ENCODE measurements at regions of chr5 and their contacts with region 1.

Region 1: DNA sequence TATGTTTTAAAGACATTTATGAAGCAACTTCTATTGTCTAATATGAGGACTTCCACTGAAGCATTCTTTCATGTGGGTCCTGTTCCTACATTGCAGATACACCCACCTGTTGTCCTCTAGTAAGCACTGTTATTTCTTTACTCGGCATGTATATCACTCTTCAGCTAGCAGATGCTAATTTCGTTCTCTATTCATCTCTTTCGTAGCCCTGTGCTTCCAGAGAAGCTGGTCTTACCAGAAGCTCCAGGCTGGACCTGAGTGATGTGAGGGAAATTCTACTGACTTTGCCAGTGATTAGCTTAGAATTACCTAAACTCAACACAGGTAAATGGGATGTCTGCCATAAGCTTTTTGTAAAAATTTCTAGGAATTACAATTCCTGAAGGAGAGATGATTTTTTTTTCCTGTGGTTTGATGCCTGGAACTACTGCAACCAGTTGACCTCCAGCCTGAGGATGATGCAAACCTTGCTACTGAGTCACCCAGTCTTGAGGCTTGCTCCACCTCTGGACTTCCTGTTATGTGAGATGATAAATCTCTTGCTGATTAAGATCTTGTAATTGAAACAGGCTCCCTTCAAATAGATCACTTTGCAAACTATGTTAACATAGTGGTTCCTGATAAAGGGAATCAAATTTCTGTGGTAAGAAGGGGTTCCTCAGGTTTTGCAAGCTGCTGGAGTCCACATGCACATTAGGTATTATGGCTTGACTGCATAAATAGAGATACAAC is 52.2 kb upstream of the SPINK5 start:
- DNase-seq: no peak
- ATAC-seq: no peak
- H3K4me3 ChIP-seq: no peak overlapping the region
- H3K27ac ChIP-seq: no peak overlapping the region
- H3K4me1 ChIP-seq: no peaks in the 10 kb centered on the region
- H3K27me3 ChIP-seq: no peaks in the 10 kb centered on the region
- CTCF ChIP-seq: no peak

Region 2: DNA sequence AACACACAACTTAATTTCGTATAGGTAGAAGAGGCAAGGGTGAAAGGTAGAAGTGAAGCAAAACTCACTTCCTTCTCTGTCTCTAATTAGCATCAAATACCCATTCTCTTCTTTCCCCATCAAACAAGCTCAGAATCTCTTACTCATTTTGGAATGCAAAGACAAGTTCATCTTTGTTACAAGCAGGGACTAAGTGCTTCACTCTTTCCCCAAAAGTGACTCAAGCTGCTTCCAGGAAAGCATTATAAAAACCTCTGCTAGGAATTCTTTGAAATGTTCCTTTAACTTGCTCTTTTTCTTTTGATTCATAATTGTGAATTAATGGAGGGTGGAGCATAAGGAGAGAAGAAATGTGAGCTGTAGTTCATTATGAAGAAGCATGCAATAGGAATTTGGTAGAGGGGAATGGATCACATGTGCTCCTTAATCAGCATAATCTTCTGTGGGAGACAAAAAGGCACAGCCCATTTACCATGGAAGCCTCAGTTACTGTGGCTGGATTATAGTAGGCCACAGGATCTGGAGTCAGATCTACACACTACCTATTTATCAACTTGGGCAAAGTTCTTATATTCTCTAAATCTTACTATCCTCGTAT is 392.2 kb before region 1 on chr5:
- intact Hi-C with region 1: no loop called
- DNase-seq: no peak
- ATAC-seq: no peak
- H3K4me3 ChIP-seq: no peak overlapping the region
- H3K27ac ChIP-seq: no peak overlapping the region
- H3K4me1 ChIP-seq: no peaks in the 10 kb centered on the region
- H3K27me3 ChIP-seq: no peaks in the 10 kb centered on the region
- CTCF ChIP-seq: no peak

Region 3: GRCh38 chr5:147963948-147964693 is 47.4 kb before region 1 on chr5:
- intact Hi-C with region 1: no loop called
- DNase-seq: no peak
- ATAC-seq: peak in 3 of 4 donors; percentile 36 to 52 (median 37)
- H3K4me3 ChIP-seq: no peak overlapping the region
- H3K27ac ChIP-seq: peak overlapping the region; percentile 44
- H3K4me1 ChIP-seq: no peaks in the 10 kb centered on the region
- H3K27me3 ChIP-seq: no peaks in the 10 kb centered on the region
- CTCF ChIP-seq: no peak

Region 4: DNA sequence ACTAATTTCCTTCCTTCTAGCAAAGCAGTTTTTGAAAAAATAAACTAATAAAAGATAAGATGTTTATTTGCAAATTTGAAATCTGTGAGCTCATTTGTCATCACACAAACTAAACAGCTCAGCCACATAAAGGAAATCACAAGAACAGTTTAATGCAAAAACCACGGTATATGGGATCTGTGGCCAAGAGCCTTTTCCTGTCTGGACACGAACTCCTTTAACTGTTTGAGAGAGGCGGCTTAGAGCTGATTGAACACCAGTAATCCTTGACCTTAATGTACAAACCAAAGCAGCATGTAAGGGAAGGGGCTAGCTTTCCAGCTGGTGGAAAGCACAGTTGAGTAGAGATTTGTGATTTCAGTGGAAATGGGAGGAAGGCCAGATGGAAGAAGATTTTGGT is 14.1 kb before region 1 on chr5:
- intact Hi-C with region 1: loop called in 1 of 2 experiments (anchors 1 kb)
- DNase-seq: no peak
- ATAC-seq: no peak
- H3K4me3 ChIP-seq: no peak overlapping the region
- H3K27ac ChIP-seq: no peak overlapping the region
- H3K4me1 ChIP-seq: no peaks in the 10 kb centered on the region
- H3K27me3 ChIP-seq: peaks cover 0 to 2% (median 0%) of the 10 kb centered on the region in 3 donors
- CTCF ChIP-seq: no peak